Heart left ventricle (tissue), 16 donors: ENCODE measurements at regions of chr5 and their contacts with region 1.

Region 1: DNA sequence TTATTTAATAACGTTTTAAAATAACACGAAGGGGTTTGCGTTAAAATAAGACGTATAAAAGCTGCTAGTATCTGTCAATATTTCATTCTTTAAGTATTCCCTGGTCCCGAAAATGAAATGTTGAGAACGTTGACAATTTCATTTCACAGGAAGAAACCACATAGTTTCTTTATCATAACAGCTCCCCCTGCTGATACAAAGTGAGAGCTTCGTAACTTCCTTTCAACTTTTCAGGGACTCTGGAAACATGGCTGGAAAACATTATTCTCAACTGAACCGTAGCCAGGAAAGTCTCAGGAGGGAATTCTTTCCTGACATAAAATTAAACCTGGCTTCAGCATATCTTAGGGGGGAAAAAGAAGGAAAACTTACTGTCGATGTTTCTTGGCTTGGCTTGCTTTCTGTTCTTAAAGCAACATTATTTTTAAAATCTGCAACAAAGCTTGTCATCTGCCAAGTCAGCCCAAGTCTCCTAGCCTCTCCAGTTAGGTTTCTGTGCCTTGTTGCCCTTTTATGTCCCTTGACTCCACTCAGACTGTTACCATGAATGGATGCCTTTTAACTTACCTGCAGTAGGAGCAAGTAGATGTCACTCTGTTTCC is 122.9 kb upstream of the DAB2 start:
- DNase-seq: peak in 2 of 5 donors; percentile 62 to 72
- ATAC-seq: peak; percentile 25 to 76 (median 63)
- H3K4me3 ChIP-seq: peak overlapping the region in 2 of 12 donors; percentile 6 to 15
- H3K27ac ChIP-seq: no peak overlapping the region
- H3K4me1 ChIP-seq: peaks cover 0 to 28% (median 7%) of the 10 kb centered on the region in 12 donors
- H3K27me3 ChIP-seq: no peaks in the 10 kb centered on the region
- CTCF ChIP-seq: peak; percentile 61 to 87 (median 74)
- POLR2A ChIP-seq: no peak

Region 2: DNA sequence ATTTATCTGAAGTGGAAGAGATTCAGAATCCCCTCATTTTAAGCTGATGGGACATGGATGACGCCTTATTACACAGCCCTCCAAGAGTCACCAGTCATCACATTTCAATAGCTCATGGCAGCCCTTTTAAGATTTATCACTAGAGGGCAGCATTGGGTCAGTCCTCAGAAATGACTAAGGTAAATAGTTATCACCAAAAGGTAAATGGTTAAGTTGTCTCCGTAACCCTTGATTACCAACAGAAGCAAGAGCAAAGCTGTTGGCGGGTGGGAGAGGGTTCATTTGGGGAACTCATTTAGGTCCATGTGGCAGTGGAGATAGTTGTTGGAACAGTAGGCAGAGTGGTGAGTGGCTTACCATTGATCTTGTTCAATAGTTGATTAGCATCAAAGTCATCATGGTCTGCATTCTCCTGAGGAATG is 171.3 kb before region 1 on chr5:
- intact Hi-C with region 1: loop called (anchors 1 to 5 kb)
- DNase-seq: no peak
- ATAC-seq: peak in 3 of 4 donors; percentile 49 to 79 (median 58)
- H3K4me3 ChIP-seq: no peak overlapping the region
- H3K27ac ChIP-seq: no peak overlapping the region
- H3K4me1 ChIP-seq: peaks cover 0 to 9% (median 0%) of the 10 kb centered on the region in 12 donors
- H3K27me3 ChIP-seq: no peaks in the 10 kb centered on the region
- CTCF ChIP-seq: peak; percentile 60 to 87 (median 73)
- POLR2A ChIP-seq: no peak

Region 3: GRCh38 chr5:39466846-39467245 is 80.8 kb before region 1 on chr5:
- intact Hi-C with region 1: loop called in 1 of 10 experiments (anchors 2 kb)
- DNase-seq: no peak
- ATAC-seq: peak in 2 of 4 donors; percentile 10 to 40
- H3K4me3 ChIP-seq: no peak overlapping the region
- H3K27ac ChIP-seq: peak overlapping the region in 4 of 12 donors; percentile 22 to 69 (median 46)
- H3K4me1 ChIP-seq: peaks cover 0 to 53% (median 0%) of the 10 kb centered on the region in 12 donors
- H3K27me3 ChIP-seq: no peaks in the 10 kb centered on the region
- CTCF ChIP-seq: no peak
- POLR2A ChIP-seq: no peak

Region 4: GRCh38 chr5:39794513-39795210 is 247.0 kb after region 1 on chr5:
- intact Hi-C with region 1: no loop called
- DNase-seq: peak in 4 of 5 donors; percentile 14 to 27 (median 25)
- ATAC-seq: peak in 3 of 4 donors; percentile 33 to 68 (median 61)
- H3K4me3 ChIP-seq: peak overlapping the region in 1 of 12 donors; percentile 4
- H3K27ac ChIP-seq: peak overlapping the region in 3 of 12 donors; percentile 7 to 52 (median 9)
- H3K4me1 ChIP-seq: peaks cover 0 to 24% (median 0%) of the 10 kb centered on the region in 12 donors
- H3K27me3 ChIP-seq: no peaks in the 10 kb centered on the region
- CTCF ChIP-seq: no peak
- POLR2A ChIP-seq: no peak